BJ (cell line): ENCODE measurements at regions of chr6 and their contacts with region 1.

Region 1: GRCh38 chr6:81562169-81562568 is 190.3 kb downstream of the TENT5A start:
- DNase-seq: peak; percentile 46
- H3K4me3 ChIP-seq: no peak overlapping the region
- H3K27me3 ChIP-seq: no peaks in the 10 kb centered on the region
- CTCF ChIP-seq: no peak

Region 2: GRCh38 chr6:81614292-81614691 is 52.1 kb after region 1 on chr6:
- CTCF ChIA-PET with region 1: no interaction called
- POLR2A ChIA-PET with region 1: interaction called, 28 read pairs
- DNase-seq: no peak
- H3K4me3 ChIP-seq: no peak overlapping the region
- H3K27me3 ChIP-seq: no peaks in the 10 kb centered on the region
- CTCF ChIP-seq: no peak